BJ (cell line): ENCODE measurements at regions of chr6 and their contacts with region 1.

Region 1: GRCh38 chr6:154156135-154156896 is 117.3 kb downstream of the OPRM1 start:
- DNase-seq: no peak
- H3K4me3 ChIP-seq: no peak overlapping the region
- H3K27me3 ChIP-seq: no peaks in the 10 kb centered on the region
- CTCF ChIP-seq: peak; percentile 73

Region 2: GRCh38 chr6:154276810-154277628 is 120.7 kb after region 1 on chr6:
- CTCF ChIA-PET with region 1: interaction called, 25 read pairs
- POLR2A ChIA-PET with region 1: no interaction called
- DNase-seq: no peak
- H3K4me3 ChIP-seq: no peak overlapping the region
- H3K27me3 ChIP-seq: no peaks in the 10 kb centered on the region
- CTCF ChIP-seq: peak; percentile 50

Region 3: GRCh38 chr6:154319231-154319858 is 163.0 kb after region 1 on chr6:
- CTCF ChIA-PET with region 1: no interaction called
- POLR2A ChIA-PET with region 1: interaction called, 21 read pairs
- DNase-seq: peak; percentile 70
- H3K4me3 ChIP-seq: no peak overlapping the region
- H3K27me3 ChIP-seq: no peaks in the 10 kb centered on the region
- CTCF ChIP-seq: no peak

Region 4: DNA sequence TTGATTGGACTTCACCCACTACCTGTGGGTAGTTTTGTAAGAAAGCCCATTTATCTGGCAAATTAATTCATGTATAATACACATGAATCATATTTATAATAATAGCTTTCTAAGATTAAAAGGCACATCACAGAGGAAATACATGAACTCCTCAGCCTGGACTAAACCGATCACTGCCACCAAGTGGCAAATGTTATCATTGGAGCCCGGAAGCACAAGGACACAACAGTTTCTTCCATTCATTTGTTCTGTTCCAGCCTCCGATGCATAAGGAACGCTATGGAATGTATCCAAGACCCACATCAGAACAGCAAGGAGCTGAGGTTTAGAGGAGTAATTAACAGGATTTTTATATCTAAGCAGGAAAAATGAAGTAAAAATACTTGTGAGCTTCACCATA is 214.2 kb after region 1 on chr6:
- CTCF ChIA-PET with region 1: interaction called, 20 read pairs
- POLR2A ChIA-PET with region 1: no interaction called
- DNase-seq: peak; percentile 3
- H3K4me3 ChIP-seq: no peak overlapping the region
- H3K27me3 ChIP-seq: 0 out of 2 replicates have a peak, but pooled peaks cover 1% of the 10 kb centered on the region
- CTCF ChIP-seq: peak; percentile 58